ENCODE measurements at regions of chr18 and their contacts with region 1.

Region 1: GRCh38 chr18:2680216-2680792 is 24.8 kb downstream of the SMCHD1 start:
- DNase-seq: no peak
- ATAC-seq: no peak
- H3K4me3 Mint-ChIP-seq: no peak overlapping the region
- H3K27ac Mint-ChIP-seq: peak overlapping the region; percentile 37
- H3K4me1 Mint-ChIP-seq: peaks cover 54% of the 10 kb centered on the region
- H3K27me3 Mint-ChIP-seq: no peaks in the 10 kb centered on the region

Region 2: GRCh38 chr18:2312440-2312839 is 367.9 kb before region 1 on chr18:
- CTCF ChIA-PET with region 1: no interaction called
- POLR2A ChIA-PET with region 1: no interaction called
- intact Hi-C with region 1: no loop called
- DNase-seq: no peak
- ATAC-seq: no peak
- H3K4me3 Mint-ChIP-seq: no peak overlapping the region
- H3K27ac Mint-ChIP-seq: no peak overlapping the region
- H3K4me1 Mint-ChIP-seq: no peaks in the 10 kb centered on the region
- H3K27me3 Mint-ChIP-seq: peaks cover 17% of the 10 kb centered on the region

Region 3: DNA sequence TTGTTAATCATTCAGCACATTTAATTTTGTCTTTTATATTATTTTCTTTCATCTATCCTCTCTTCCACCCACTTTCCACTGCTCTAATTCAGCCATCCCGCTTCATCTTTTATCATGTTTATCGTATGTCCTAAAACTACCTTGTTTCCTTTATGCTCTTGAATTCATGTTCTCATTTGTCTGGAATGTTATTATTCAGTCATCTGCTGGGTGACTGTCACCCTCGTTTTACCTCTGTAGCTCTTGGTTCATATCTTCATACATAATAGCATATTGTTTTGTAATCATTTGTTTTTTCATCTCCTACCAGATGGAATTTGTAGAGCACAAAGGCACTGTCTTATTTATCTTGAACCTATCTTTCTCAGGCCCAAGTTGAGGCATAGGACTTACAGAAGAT is 12.2 kb after region 1 on chr18:
- CTCF ChIA-PET with region 1: interaction called, 4 read pairs
- POLR2A ChIA-PET with region 1: no interaction called
- intact Hi-C with region 1: loop called in 1 of 2 experiments (anchors 2 kb)
- DNase-seq: no peak
- ATAC-seq: no peak
- H3K4me3 Mint-ChIP-seq: no peak overlapping the region
- H3K27ac Mint-ChIP-seq: peak overlapping the region; percentile 55
- H3K4me1 Mint-ChIP-seq: peaks cover 36% of the 10 kb centered on the region
- H3K27me3 Mint-ChIP-seq: no peaks in the 10 kb centered on the region

Region 4: GRCh38 chr18:2716394-2717326 is 36.4 kb after region 1 on chr18:
- CTCF ChIA-PET with region 1: interaction called, 4 read pairs
- POLR2A ChIA-PET with region 1: no interaction called
- intact Hi-C with region 1: loop called in 1 of 2 experiments (anchors 5 kb)
- DNase-seq: no peak
- ATAC-seq: no peak
- H3K4me3 Mint-ChIP-seq: no peak overlapping the region
- H3K27ac Mint-ChIP-seq: peak overlapping the region; percentile 33
- H3K4me1 Mint-ChIP-seq: peaks cover 42% of the 10 kb centered on the region
- H3K27me3 Mint-ChIP-seq: no peaks in the 10 kb centered on the region